IMR-90 (cell line): ENCODE measurements at regions of chr2 and their contacts with region 1.

Region 1: DNA sequence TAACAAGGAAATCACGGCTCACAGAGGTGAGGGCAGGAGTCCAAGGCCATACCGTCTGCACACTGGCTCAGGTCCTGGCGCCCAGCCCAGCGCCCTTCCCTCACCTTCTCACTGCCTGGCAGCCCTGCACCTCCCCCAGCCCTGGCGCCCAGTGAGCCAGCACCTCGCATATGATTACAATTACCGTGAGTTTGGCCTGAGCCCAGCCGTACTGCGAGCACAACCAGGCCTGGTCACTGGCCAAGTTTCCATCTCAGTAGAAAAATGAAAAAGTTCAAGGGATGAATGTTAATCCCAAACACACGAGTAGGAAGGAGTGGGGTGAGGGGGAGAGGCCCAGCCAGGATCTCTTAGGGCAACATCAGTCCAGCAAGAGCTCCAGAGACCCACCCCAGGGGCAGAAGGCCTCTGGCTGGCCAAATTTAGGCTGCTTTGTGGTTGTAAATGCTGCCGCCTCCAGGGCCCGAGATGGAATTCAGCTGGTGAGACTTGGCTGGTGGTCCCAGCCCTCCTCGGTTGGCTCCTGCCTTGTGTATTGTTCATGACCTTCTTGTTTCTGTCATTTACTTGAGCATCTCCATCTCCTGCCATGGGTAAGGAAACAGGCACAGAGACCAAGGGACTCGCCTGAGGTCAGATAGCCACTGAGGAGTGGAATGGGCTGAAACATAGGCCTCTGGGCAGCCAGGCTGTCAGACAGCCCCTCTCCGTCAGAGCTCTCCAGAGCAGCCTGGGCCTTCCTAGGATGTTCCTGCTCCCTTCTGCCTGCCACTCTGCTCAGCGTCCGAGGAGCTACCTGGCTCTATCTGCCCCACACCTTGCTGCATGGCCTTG is 68.2 kb downstream of the MCFD2 start:
- DNase-seq: peak; percentile 96
- ATAC-seq: peak; percentile 36
- H3K4me3 ChIP-seq: no peak overlapping the region
- H3K27ac ChIP-seq: peak overlapping the region; percentile 95
- H3K4me1 ChIP-seq: peaks cover 52% of the 10 kb centered on the region
- H3K27me3 ChIP-seq: no peaks in the 10 kb centered on the region
- CTCF ChIP-seq: no peak
- POLR2A ChIP-seq: no peak
- RAD21 ChIP-seq: peak; percentile 4

Region 2: DNA sequence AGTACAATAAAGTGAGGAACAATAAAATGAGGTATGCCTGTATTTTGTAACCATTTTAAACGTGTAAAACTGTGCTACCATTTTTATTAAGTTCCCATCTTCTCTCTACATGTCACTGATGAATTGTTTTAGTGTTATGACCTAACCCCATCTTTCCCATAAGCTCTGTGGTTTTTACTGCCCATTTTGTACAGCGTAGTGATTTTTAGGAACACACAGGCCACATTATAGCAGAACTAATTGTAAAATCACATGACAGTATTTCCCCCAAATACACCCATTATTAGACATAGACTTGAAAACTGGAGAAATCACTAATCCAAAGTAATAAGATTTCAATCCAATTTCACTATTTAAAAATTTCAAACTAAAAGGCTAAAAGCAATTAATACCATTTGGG is 237.4 kb before region 1 on chr2:
- CTCF ChIA-PET with region 1: no interaction called
- POLR2A ChIA-PET with region 1: no interaction called
- dilution Hi-C with region 1: no loop called
- in situ Hi-C with region 1: no loop called
- intact Hi-C with region 1: no loop called
- DNase-seq: no peak
- ATAC-seq: no peak
- H3K4me3 ChIP-seq: no peak overlapping the region
- H3K27ac ChIP-seq: no peak overlapping the region
- H3K4me1 ChIP-seq: no peaks in the 10 kb centered on the region
- H3K27me3 ChIP-seq: no peaks in the 10 kb centered on the region
- CTCF ChIP-seq: no peak
- POLR2A ChIP-seq: no peak
- RAD21 ChIP-seq: no peak

Region 3: DNA sequence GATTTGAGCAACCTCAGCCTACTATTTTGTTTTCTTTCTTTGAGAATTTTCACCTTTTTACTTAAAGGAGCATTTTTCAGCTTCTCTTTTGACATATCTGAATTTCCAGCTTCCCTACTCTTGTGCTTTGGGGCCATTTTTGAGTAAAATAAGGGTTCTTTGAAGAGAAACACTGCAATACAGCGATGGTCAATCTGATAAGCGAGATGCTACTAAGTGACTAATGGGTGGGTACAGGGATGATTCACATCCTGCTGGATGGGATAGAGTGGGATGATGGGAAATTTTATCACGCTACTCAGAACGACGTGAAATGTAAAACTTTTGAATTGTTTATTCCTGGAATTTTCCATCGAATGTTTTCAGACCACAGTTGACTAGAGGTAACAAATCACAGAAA is 156.6 kb before region 1 on chr2:
- CTCF ChIA-PET with region 1: no interaction called
- POLR2A ChIA-PET with region 1: no interaction called
- dilution Hi-C with region 1: no loop called
- in situ Hi-C with region 1: no loop called
- intact Hi-C with region 1: no loop called
- DNase-seq: peak; percentile 95
- ATAC-seq: peak; percentile 89
- H3K4me3 ChIP-seq: no peak overlapping the region
- H3K27ac ChIP-seq: peak overlapping the region; percentile 100; the same call in 1 of the 2 replicates
- H3K4me1 ChIP-seq: peaks cover 11% of the 10 kb centered on the region
- H3K27me3 ChIP-seq: no peaks in the 10 kb centered on the region
- CTCF ChIP-seq: no peak
- POLR2A ChIP-seq: no peak
- RAD21 ChIP-seq: no peak

Region 4: DNA sequence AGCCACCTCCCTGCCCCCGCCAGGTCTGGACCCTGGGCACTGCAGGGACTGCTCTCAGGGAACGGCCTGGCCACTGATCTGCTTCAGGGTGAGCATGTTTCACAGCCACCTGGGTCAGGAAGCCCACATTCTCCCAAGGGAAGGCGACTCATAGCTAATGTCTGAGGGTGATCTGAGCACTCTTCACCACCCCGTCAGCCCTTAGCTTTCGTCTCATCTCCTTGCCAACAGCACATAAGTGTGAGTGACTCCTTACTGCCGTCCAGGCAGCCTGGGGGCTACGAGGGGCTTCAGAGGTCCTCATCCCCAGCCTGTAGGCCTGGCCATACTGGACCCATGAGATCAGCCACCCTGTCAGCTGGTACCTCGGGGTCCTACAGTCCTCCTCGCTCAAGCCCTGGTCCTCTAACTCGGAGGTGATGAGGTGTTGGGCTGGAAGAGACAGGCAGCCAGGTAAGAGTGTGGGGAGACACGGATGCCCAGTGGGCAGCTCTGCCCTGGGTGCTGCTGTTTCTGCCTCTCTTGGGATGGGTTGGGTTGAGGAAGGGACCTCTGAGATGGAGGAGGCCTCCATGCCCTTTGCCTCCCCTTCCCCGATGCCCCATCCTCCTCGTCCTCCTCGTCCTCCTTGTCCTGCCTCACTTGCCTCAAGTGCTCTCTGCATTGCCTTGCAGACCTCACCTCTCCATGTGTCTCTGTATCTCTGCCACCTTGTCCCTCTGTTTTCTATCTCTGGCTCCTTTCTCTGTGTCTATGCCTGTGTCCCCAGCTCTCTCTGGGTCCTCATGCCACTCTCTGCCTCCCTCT is 19.6 kb before region 1 on chr2:
- CTCF ChIA-PET with region 1: interaction called, 3 read pairs
- POLR2A ChIA-PET with region 1: interaction called, 6 read pairs
- dilution Hi-C with region 1: no loop called
- in situ Hi-C with region 1: no loop called
- intact Hi-C with region 1: loop called (anchors 2 kb)
- DNase-seq: peak; percentile 81
- ATAC-seq: no peak; the same call in 1 of the 2 replicates
- H3K4me3 ChIP-seq: no peak overlapping the region
- H3K27ac ChIP-seq: peak overlapping the region; percentile 25
- H3K4me1 ChIP-seq: peaks cover 44% of the 10 kb centered on the region
- H3K27me3 ChIP-seq: no peaks in the 10 kb centered on the region
- CTCF ChIP-seq: no peak
- POLR2A ChIP-seq: no peak
- RAD21 ChIP-seq: no peak

Region 5: DNA sequence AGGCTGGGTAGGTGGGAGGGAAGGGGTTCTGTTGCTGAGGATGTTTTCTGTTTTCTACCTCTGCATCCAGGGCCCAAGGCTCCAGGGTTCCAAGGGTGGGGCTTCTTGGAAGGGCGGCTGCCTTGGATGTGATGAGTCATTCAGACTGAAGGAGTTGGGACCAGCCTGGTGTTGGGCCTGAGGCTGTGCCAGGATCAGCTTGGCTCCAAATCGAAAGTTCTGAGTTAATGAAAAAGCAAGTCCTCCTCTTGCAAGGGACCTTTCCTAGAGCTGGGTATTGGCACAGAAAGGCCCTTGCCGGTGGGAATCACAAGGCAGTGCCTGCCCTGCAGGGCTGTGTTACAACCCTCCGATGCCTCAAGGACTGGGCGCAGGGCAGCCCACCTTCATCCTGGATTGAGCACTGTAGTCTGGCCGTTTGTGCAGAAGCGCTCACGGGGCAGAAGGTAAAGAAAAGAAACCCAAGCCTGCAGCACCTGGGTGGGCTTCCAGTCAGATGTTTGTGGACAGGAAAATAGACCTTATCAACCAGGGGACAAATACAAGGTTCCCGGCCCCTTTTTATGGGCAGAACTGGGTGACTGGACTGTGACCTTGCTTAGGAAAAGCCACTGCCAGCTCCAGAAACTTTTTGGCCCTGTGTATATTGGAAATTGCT is 120.7 kb after region 1 on chr2:
- CTCF ChIA-PET with region 1: no interaction called
- POLR2A ChIA-PET with region 1: no interaction called
- dilution Hi-C with region 1: no loop called
- in situ Hi-C with region 1: no loop called
- intact Hi-C with region 1: no loop called
- DNase-seq: peak; percentile 85
- ATAC-seq: peak; percentile 68
- H3K4me3 ChIP-seq: no peak overlapping the region
- H3K27ac ChIP-seq: peak overlapping the region; percentile 90
- H3K4me1 ChIP-seq: peaks cover 36% of the 10 kb centered on the region
- H3K27me3 ChIP-seq: no peaks in the 10 kb centered on the region
- CTCF ChIP-seq: no peak
- POLR2A ChIP-seq: no peak
- RAD21 ChIP-seq: no peak